Kidney (tissue), 22 donors: ENCODE measurements at regions of chr2 and their contacts with region 1.

Region 1: DNA sequence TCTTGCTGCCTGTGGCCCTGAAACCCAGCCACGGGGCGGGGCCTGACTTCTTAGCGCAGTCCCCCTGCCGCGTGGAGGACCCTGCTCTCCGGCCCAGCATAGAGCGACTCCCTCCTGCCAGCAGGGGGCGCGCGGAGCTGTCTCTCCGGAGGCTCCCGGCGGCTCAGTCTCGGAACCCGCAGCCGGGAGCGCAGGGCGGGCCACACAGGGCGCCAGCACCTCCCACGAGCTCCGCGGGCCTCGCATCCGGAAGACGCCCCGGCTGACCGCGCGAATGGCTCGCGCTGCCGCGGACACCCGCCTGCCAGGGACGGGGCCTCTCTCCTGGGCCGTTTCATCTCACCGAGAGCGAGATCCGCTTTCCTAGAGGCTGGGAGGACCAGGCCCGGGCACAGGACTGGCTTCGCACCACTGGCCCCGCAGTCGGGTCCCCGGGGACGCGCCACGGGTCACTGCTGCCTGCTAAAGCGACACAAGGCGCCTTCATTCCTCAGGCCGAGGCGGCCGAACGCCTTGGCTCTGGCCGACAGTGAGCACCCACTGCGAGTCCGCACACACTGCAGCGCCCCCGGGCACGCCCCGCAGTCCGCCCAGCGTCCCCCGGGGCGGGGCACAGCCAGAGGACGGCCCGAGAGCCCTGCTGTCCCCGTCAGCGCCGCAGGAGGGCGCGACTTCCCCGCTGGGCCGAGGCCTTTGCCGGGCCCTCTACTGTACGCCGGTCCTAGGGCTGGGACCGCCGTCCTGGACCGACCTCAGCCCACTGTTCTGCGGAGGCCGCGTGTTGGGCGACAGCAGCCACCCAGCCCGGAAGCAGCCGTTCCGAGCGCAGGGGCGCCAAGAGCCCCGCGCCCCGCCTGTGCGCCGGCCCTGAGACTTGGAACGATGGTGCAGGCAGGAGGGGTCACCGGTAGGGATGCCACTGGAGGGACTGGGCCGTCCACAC is 39.0 kb upstream of the ARHGEF4 start:
- DNase-seq: peak; percentile 92 to 96 (median 95)
- H3K4me3 ChIP-seq: peak overlapping the region; percentile 54 to 74 (median 72)
- H3K27ac ChIP-seq: peak overlapping the region; percentile 77 to 90
- H3K4me1 ChIP-seq: peaks cover 0 to 6% (median 0%) of the 10 kb centered on the region in 3 donors
- H3K27me3 ChIP-seq: no peaks in the 10 kb centered on the region
- CTCF ChIP-seq: peak; percentile 87

Region 2: GRCh38 chr2:130873700-130874346 is 76.1 kb after region 1 on chr2:
- intact Hi-C with region 1: loop called (anchors 5 kb)
- DNase-seq: peak in 4 of 5 donors; percentile 74 to 85 (median 80)
- H3K4me3 ChIP-seq: no peak overlapping the region
- H3K27ac ChIP-seq: no peak overlapping the region
- H3K4me1 ChIP-seq: no peaks in the 10 kb centered on the region
- H3K27me3 ChIP-seq: no peaks in the 10 kb centered on the region
- CTCF ChIP-seq: peak; percentile 62

Region 3: GRCh38 chr2:131322209-131322608 is 524.4 kb after region 1 on chr2:
- intact Hi-C with region 1: no loop called
- DNase-seq: no peak
- H3K4me3 ChIP-seq: no peak overlapping the region
- H3K27ac ChIP-seq: no peak overlapping the region
- H3K4me1 ChIP-seq: no peaks in the 10 kb centered on the region
- H3K27me3 ChIP-seq: no peaks in the 10 kb centered on the region
- CTCF ChIP-seq: no peak

Region 4: GRCh38 chr2:131349021-131349420 is 551.3 kb after region 1 on chr2:
- intact Hi-C with region 1: no loop called
- DNase-seq: no peak
- H3K4me3 ChIP-seq: no peak overlapping the region
- H3K27ac ChIP-seq: no peak overlapping the region
- H3K4me1 ChIP-seq: no peaks in the 10 kb centered on the region
- H3K27me3 ChIP-seq: no peaks in the 10 kb centered on the region
- CTCF ChIP-seq: no peak